Activated CD8-positive, alpha-beta T cell treated with anti-CD3 and anti-CD28 coated beads, Interleukin-2, amount 10 ng/mL, durations not matched to agents 7 days and 5 days (primary cell): ENCODE measurements at regions of chr12 and their contacts with region 1.

Region 1: GRCh38 chr12:121005346-121005815 is 10.9 kb downstream of the C12orf43 start:
- DNase-seq: peak; percentile 67
- ATAC-seq: peak; percentile 62
- H3K4me3 Mint-ChIP-seq: no peak overlapping the region
- H3K27ac Mint-ChIP-seq: peak overlapping the region; percentile 46
- H3K4me1 Mint-ChIP-seq: peaks cover 12% of the 10 kb centered on the region
- H3K27me3 Mint-ChIP-seq: no peaks in the 10 kb centered on the region

Region 2: GRCh38 chr12:120710031-120710804 is 295.2 kb before region 1 on chr12 and contains the start of gene UNC119B:
- CTCF ChIA-PET with region 1: no interaction called
- POLR2A ChIA-PET with region 1: no interaction called
- DNase-seq: peak; percentile 77
- ATAC-seq: peak; percentile 83
- H3K4me3 Mint-ChIP-seq: peak within 1 kb of the TSS; percentile 87
- H3K27ac Mint-ChIP-seq: peak within 1 kb of the TSS; percentile 81
- H3K4me1 Mint-ChIP-seq: peaks cover 37% of the 10 kb centered on the region
- H3K27me3 Mint-ChIP-seq: no peaks in the 10 kb centered on the region
- total RNA-seq, gene UNC119B: 18.5 to 18.9 TPM

Region 3: GRCh38 chr12:120994589-120995337 is 10.6 kb before region 1 on chr12:
- CTCF ChIA-PET with region 1: no interaction called
- POLR2A ChIA-PET with region 1: no interaction called
- DNase-seq: no peak
- ATAC-seq: no peak
- H3K4me3 Mint-ChIP-seq: no peak overlapping the region
- H3K27ac Mint-ChIP-seq: no peak overlapping the region
- H3K4me1 Mint-ChIP-seq: no peaks in the 10 kb centered on the region
- H3K27me3 Mint-ChIP-seq: peaks cover 23% of the 10 kb centered on the region

Region 4: DNA sequence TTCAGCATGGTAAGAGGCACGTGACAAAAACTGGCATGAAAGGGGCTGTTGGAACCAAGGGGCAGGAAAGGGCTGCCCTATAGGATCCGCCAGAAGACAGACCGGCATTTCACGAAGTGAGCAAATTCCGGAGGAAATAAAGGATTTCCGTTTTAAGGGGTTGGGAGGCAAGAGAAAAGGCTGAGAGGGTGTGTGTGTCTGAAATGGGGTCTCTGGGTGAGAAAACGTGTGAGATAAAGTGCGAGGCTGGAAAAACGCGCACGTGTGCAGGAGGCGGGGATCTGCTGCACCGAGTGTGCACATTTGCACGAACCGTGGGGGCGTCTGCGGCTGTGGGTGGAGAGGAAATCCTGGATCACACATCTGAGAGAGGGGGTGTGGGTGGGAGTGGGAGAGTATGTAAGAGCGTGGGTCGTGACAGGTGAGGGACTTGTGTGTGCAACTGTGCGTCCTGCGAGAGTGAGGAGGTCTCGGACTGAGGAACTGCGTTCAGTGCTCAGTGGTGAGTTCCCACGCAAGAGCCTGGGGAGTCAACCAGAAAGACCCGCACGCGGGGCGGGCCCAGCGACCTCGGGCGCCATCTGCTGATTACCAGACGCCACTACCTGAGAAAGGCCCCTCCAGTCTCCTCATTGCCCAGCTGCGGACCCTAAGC is 90.3 kb after region 1 on chr12:
- CTCF ChIA-PET with region 1: interaction called, 11 read pairs
- POLR2A ChIA-PET with region 1: no interaction called
- DNase-seq: peak; percentile 88
- ATAC-seq: peak; percentile 88
- H3K4me3 Mint-ChIP-seq: peak overlapping the region; percentile 81
- H3K27ac Mint-ChIP-seq: peak overlapping the region; percentile 82
- H3K4me1 Mint-ChIP-seq: peaks cover 52% of the 10 kb centered on the region
- H3K27me3 Mint-ChIP-seq: peaks cover 2% of the 10 kb centered on the region